K562 (cell line): ENCODE measurements at regions of chr6 and their contacts with region 1.

Region 1: GRCh38 chr6:28064272-28064671 is 16.1 kb upstream of the ZNF165 start:
- DNase-seq: no peak
- ATAC-seq: no peak
- H3K4me3 ChIP-seq: no peak overlapping the region
- H3K27ac ChIP-seq: no peak overlapping the region
- H3K4me1 ChIP-seq: peaks cover 0 to 4% of the 10 kb centered on the region in 2 experiments; a peak in 3 of 5 replicates
- H3K27me3 ChIP-seq: no peaks in the 10 kb centered on the region
- CTCF ChIP-seq: no peak
- EP300 ChIP-seq: no peak
- POLR2A ChIP-seq: no peak
- RAD21 ChIP-seq: no peak

Region 2: GRCh38 chr6:28080631-28081485 is 16.6 kb after region 1 on chr6:
- CTCF ChIA-PET with region 1: no interaction called
- POLR2A ChIA-PET with region 1: interaction called, 15 read pairs
- in situ Hi-C with region 1: no loop called
- intact Hi-C with region 1: no loop called
- DNase-seq: peak; percentile 91 to 99 (median 93)
- ATAC-seq: peak; percentile 91
- H3K4me3 ChIP-seq: peak overlapping the region; percentile 96
- H3K27ac ChIP-seq: peak overlapping the region; percentile 94
- H3K4me1 ChIP-seq: peaks cover 0 to 2% of the 10 kb centered on the region in 2 experiments; a peak in 4 of 5 replicates
- H3K27me3 ChIP-seq: no peaks in the 10 kb centered on the region
- CTCF ChIP-seq: no peak; a peak in 1 of 6 replicates
- EP300 ChIP-seq: peak; percentile 68; the same call in 1 of the 2 replicates
- POLR2A ChIP-seq: peak; percentile 79
- RAD21 ChIP-seq: no peak; a peak in 2 of 4 replicates